Tibial artery (tissue), 4 donors: ENCODE measurements at regions of chr9 and their contacts with region 1.

Region 1: GRCh38 chr9:92463984-92464383 is 18.3 kb downstream of the ASPN start:
- DNase-seq: no peak
- H3K4me3 ChIP-seq: no peak overlapping the region
- H3K27ac ChIP-seq: peak overlapping the region; percentile 85 to 87
- H3K4me1 ChIP-seq: peaks cover 0 to 35% (median 13%) of the 10 kb centered on the region in 4 donors
- H3K27me3 ChIP-seq: no peaks in the 10 kb centered on the region
- CTCF ChIP-seq: no peak

Region 2: GRCh38 chr9:92616655-92617111 is 152.7 kb after region 1 on chr9:
- intact Hi-C with region 1: loop called (anchors 5 kb)
- DNase-seq: no peak
- H3K4me3 ChIP-seq: no peak overlapping the region
- H3K27ac ChIP-seq: peak overlapping the region; percentile 68 to 80
- H3K4me1 ChIP-seq: peaks cover 0 to 72% (median 43%) of the 10 kb centered on the region in 4 donors
- H3K27me3 ChIP-seq: no peaks in the 10 kb centered on the region
- CTCF ChIP-seq: no peak